T-cell (primary cell): ENCODE measurements at regions of chr5 and their contacts with region 1.

Region 1: DNA sequence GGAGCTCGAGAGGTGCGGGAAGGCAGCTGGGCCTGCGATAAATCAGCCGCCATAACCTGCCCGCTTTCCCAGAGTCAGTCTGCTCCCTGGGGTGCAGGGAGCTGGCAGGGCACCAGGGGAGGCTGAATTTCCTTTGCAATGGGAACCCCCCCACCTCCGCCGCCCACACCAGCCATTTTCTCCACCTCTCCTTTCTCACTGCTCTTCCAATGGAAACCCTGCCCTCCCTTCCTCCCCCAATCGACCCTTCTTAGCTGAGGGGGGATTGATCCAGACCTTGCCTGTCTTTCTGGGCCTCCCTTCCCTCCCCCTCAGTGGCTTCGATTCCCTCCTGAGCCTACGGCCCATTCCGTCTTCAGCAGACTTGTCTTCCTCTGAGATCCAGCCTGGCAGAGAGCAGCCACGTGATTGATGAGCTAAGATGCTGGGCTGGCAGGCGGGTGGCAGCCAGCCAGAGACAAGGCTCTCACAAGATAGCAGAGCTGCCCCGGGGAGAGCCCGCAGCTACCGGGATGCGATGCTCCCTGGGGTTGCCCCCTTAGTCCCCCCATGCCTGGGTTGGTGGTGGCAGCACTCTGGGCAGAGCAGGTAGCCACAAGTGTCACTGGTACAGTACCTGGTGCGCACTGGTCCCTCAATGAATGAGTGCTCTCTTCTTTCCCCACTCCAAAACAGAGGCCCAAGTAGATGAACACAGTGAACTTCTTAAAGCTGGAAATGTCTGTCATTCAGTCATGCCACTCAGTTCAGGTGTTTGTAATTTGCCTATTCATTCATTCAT is 53.7 kb upstream of the FABP6 start:
- DNase-seq: no peak
- ATAC-seq: no peak
- H3K4me3 ChIP-seq: no peak overlapping the region
- H3K4me3 Mint-ChIP-seq: no peak overlapping the region
- H3K27ac ChIP-seq: no peak overlapping the region
- H3K27ac Mint-ChIP-seq: no peak overlapping the region
- H3K4me1 ChIP-seq: no peaks in the 10 kb centered on the region
- H3K4me1 Mint-ChIP-seq: no peaks in the 10 kb centered on the region
- H3K27me3 ChIP-seq: no peaks in the 10 kb centered on the region
- H3K27me3 Mint-ChIP-seq: peaks cover 0 to 1% of the 10 kb centered on the region in 2 donors

Region 2: GRCh38 chr5:160188142-160189015 is 12.8 kb after region 1 on chr5:
- CTCF ChIA-PET with region 1: no interaction called
- POLR2A ChIA-PET with region 1: interaction called in 1 of 2 experiments, 11 read pairs
- DNase-seq: no peak
- ATAC-seq: peak in 1 of 4 experiments; percentile 27
- H3K4me3 ChIP-seq: peak overlapping the region in 1 of 2 donors; percentile 52
- H3K4me3 Mint-ChIP-seq: peak overlapping the region in 1 of 3 donors; percentile 69
- H3K27ac ChIP-seq: no peak overlapping the region
- H3K27ac Mint-ChIP-seq: no peak overlapping the region
- H3K4me1 ChIP-seq: peaks cover 0 to 5% of the 10 kb centered on the region in 2 experiments
- H3K4me1 Mint-ChIP-seq: peaks cover 5 to 9% (median 6%) of the 10 kb centered on the region in 3 donors
- H3K27me3 ChIP-seq: peaks cover 0 to 21% of the 10 kb centered on the region in 2 experiments
- H3K27me3 Mint-ChIP-seq: peaks cover 13 to 36% of the 10 kb centered on the region in 2 donors

Region 3: DNA sequence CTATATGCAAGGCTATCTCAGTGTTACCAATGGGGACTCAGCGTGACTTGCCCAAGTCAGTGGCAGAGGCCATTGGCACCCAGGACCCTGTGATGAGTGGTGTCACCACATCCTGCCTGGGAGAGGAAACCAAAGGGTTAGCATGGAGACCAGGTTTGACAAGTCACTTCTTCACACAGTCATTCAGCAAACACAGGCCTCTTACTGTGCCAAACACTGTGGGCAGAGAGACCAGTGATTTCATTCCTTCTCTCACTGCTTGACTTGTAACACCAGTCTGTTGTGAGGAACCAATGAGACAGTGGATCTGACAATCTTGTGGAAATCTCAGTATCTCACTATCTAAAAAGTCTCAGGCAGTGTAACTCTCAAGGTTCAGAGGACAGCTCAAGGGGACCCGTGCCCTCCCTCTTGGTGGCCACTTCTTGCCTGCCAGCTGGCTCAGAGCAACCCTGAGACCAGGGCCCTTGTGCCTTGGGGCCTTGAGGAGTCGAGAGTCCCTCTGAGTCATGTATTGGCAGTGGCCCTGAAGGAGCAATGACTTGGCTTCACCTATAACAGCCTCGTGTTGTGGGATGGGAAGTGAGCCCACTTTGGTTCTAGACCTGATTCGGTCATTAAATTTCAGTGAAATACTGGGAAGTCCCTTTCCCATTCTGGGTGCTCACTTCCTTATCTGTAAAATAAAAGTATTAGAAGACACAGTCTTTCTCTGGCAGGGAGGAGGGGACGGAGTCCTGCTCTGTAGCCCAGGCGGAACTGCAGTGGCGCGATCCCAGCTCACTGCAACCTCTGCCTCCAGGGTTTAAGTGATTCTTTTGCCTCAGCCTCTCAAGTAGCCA is 55.3 kb after region 1 on chr5:
- CTCF ChIA-PET with region 1: interaction called in 1 of 2 experiments, 11 read pairs
- POLR2A ChIA-PET with region 1: no interaction called
- DNase-seq: no peak
- ATAC-seq: no peak
- H3K4me3 ChIP-seq: no peak overlapping the region
- H3K4me3 Mint-ChIP-seq: no peak overlapping the region
- H3K27ac ChIP-seq: no peak overlapping the region
- H3K27ac Mint-ChIP-seq: no peak overlapping the region
- H3K4me1 ChIP-seq: no peaks in the 10 kb centered on the region
- H3K4me1 Mint-ChIP-seq: no peaks in the 10 kb centered on the region
- H3K27me3 ChIP-seq: no peaks in the 10 kb centered on the region
- H3K27me3 Mint-ChIP-seq: no peaks in the 10 kb centered on the region

Region 4: DNA sequence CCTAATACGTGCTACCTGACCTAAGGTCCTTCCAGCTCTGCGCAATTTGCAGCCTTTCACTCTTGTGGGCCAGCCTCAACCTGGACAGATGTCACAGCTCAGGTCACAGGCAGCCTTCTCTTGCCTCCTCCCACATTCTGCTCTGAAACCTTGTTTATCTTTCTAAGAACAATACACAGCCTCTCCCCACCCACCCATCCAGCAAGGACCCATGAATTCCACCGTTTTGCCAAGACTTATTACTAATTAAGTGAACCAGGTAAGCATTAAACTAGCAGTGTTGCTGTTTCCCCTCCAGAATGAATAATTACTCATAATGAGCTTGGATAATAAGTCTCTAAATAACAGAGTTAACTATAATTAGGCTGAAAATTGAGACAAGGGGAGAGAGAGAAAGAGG is 64.7 kb after region 1 on chr5:
- CTCF ChIA-PET with region 1: interaction called in 1 of 2 experiments, 7 read pairs
- POLR2A ChIA-PET with region 1: interaction called in 1 of 2 experiments, 10 read pairs
- DNase-seq: no peak
- ATAC-seq: no peak
- H3K4me3 ChIP-seq: no peak overlapping the region
- H3K4me3 Mint-ChIP-seq: no peak overlapping the region
- H3K27ac ChIP-seq: no peak overlapping the region
- H3K27ac Mint-ChIP-seq: no peak overlapping the region
- H3K4me1 ChIP-seq: no peaks in the 10 kb centered on the region
- H3K4me1 Mint-ChIP-seq: no peaks in the 10 kb centered on the region
- H3K27me3 ChIP-seq: peaks cover 0 to 10% of the 10 kb centered on the region in 2 experiments
- H3K27me3 Mint-ChIP-seq: peaks cover 0 to 5% of the 10 kb centered on the region in 2 donors

Region 5: DNA sequence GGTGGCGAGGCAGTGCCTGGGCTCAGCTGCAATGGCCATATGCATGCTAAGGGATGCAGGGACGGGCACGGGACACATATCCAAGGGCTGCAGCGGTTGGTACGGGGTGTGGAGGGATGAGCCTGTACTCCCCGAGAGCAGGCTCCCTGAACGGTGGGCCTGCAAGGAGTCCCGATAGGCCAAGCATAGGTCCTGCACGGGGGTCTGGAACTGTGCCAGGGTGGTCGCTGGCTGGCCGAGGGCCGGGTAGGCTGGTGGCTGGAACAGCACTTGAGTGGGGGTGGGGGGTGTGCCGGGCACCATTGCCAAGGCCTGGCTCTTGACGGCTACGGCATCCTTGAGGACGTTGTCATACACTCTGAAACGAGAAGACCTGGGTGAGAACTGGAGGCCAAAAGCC is 77.8 kb after region 1 on chr5:
- CTCF ChIA-PET with region 1: no interaction called
- POLR2A ChIA-PET with region 1: no interaction called
- DNase-seq: no peak
- ATAC-seq: no peak
- H3K4me3 ChIP-seq: no peak overlapping the region
- H3K4me3 Mint-ChIP-seq: no peak overlapping the region
- H3K27ac ChIP-seq: no peak overlapping the region
- H3K27ac Mint-ChIP-seq: no peak overlapping the region
- H3K4me1 ChIP-seq: no peaks in the 10 kb centered on the region
- H3K4me1 Mint-ChIP-seq: no peaks in the 10 kb centered on the region
- H3K27me3 ChIP-seq: peaks cover 0 to 13% of the 10 kb centered on the region in 2 experiments
- H3K27me3 Mint-ChIP-seq: no peaks in the 10 kb centered on the region